A549 (cell line): ENCODE measurements at regions of chr1 and their contacts with region 1.

Region 1: DNA sequence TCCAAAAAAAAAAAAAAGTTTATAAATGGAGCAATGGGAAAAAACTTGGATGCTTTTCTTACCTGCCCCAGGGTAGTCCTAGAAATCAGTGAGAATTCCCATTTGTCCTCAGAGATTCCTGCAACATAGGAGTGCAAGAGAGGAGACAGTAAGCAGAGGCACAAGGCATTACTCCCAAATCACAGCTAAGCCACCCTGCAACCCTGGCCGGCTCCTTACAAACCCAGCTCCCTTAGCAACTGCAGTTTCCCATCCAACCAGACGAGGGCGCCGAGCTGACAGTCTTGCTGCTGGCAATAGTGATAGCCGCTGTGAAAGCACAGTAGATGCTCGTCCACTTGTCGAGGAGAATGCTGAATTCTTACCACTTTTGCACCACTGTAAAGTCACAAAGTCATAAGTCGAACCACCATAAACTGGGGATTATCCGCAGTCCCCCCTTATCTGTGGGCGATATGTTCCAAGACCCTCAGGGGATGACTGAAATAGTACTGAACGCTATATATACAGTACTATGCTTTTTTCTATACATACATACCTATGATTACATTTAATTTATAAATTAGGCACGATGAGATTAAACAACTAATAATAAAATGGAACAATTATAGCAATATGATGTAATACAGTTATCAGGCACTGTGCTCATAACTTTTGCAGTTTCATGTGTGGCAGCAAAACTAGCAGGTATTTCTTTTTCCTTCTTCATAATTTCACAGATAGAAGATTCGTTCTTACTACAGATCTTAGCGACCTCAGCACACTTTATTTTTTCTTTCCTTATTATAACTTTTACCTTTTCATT is 6.0 kb upstream of the PITHD1 start:
- DNase-seq: peak; percentile 38 to 77
- ATAC-seq: peak; percentile 97 to 98
- H3K4me3 ChIP-seq: no peak overlapping the region
- H3K27ac ChIP-seq: no peak overlapping the region
- H3K4me1 ChIP-seq: peaks cover 6% of the 10 kb centered on the region; the same call in 1 of the 3 replicates
- CTCF ChIP-seq: peak; percentile 67
- EP300 ChIP-seq: no peak
- POLR2A ChIP-seq: no peak
- RAD21 ChIP-seq: peak; percentile 68 to 79

Region 2: GRCh38 chr1:23673086-23673813 is 99.0 kb before region 1 on chr1:
- CTCF ChIA-PET with region 1: no interaction called
- POLR2A ChIA-PET with region 1: no interaction called
- DNase-seq: peak; percentile 67 to 79
- ATAC-seq: peak; percentile 85 to 86
- H3K4me3 ChIP-seq: no peak overlapping the region
- H3K27ac ChIP-seq: no peak overlapping the region
- H3K4me1 ChIP-seq: peaks cover 15% of the 10 kb centered on the region
- CTCF ChIP-seq: no peak
- EP300 ChIP-seq: no peak
- POLR2A ChIP-seq: no peak
- RAD21 ChIP-seq: no peak

Region 3: DNA sequence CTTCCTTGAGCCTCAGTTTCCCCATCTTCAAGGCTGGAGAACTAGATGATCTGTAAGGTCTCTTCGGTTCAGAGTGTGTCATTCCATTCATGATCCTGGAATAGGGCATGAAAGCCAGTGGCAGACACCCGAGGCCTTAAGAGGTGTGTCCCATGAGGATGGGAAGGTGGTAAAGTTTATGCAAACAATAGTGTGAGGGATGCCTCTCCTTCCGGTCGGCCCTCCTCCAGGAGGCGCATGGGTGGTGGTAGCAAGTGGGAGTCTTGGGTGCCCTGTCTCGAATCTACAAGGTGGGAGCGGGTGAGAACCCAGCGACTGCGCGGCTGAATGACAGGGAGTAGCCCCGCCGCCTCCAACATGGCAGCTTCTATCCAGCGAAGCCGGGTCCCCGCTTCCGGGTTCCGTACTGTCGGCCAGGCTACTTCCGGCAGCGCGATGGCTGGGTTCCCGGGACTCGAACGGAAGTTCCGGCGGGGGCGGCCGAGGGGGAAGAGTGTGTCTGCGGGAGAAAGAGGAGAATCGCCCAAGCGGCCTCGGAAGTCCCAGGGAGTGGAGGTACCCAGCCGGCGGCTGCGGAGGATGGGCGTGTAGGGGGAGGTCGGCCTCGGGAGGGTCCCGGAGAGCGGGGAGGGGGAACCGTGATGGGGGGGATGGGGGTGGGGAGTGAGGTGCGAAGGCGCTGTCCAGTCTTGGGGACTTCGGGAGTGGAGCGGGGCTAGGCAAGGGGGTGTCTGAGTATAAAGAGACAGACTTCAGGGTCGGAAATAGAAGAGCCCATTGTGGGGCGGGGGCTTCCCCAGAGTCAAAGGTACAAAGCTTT is 18.7 kb after region 1 on chr1 and contains the start of gene LYPLA2:
- CTCF ChIA-PET with region 1: interaction called, 11 read pairs
- POLR2A ChIA-PET with region 1: interaction called, 6 read pairs
- DNase-seq: peak; percentile 83
- ATAC-seq: peak; percentile 81 to 90
- H3K4me3 ChIP-seq: peak within 1 kb of the TSS; percentile 87
- H3K27ac ChIP-seq: peak within 1 kb of the TSS; percentile 93 to 98
- H3K4me1 ChIP-seq: peaks cover 40% of the 10 kb centered on the region
- CTCF ChIP-seq: no peak
- EP300 ChIP-seq: no peak
- POLR2A ChIP-seq: peak; percentile 28; the same call in 1 of the 2 replicates
- RAD21 ChIP-seq: no peak
- polyA plus RNA-seq, gene LYPLA2: 17.8 and 26.0 TPM in 2 replicates

Region 4: GRCh38 chr1:23800400-23801337 is 28.4 kb after region 1 on chr1 and contains the start of gene GALE:
- CTCF ChIA-PET with region 1: interaction called, 19 read pairs
- POLR2A ChIA-PET with region 1: no interaction called
- DNase-seq: peak; percentile 88 to 92
- ATAC-seq: peak; percentile 76 to 85
- H3K4me3 ChIP-seq: peak within 1 kb of the TSS; percentile 72
- H3K27ac ChIP-seq: peak within 1 kb of the TSS; percentile 89 to 99
- H3K4me1 ChIP-seq: peaks cover 12% of the 10 kb centered on the region
- CTCF ChIP-seq: no peak
- EP300 ChIP-seq: no peak
- POLR2A ChIP-seq: peak; percentile 42; the same call in 1 of the 2 replicates
- RAD21 ChIP-seq: no peak
- polyA plus RNA-seq, gene GALE: 38.9 and 39.9 TPM in 2 replicates

Region 5: GRCh38 chr1:23854568-23854967 is 82.3 kb after region 1 on chr1:
- CTCF ChIA-PET with region 1: interaction called, 10 read pairs
- POLR2A ChIA-PET with region 1: no interaction called
- DNase-seq: no peak
- ATAC-seq: peak; percentile 54 to 66; a peak in 3 of 6 replicates
- H3K4me3 ChIP-seq: no peak overlapping the region
- H3K27ac ChIP-seq: no peak overlapping the region
- H3K4me1 ChIP-seq: no peaks in the 10 kb centered on the region
- CTCF ChIP-seq: peak; percentile 43
- EP300 ChIP-seq: no peak
- POLR2A ChIP-seq: no peak
- RAD21 ChIP-seq: peak; percentile 51 to 52; a peak in 4 of 5 replicates

Region 6: DNA sequence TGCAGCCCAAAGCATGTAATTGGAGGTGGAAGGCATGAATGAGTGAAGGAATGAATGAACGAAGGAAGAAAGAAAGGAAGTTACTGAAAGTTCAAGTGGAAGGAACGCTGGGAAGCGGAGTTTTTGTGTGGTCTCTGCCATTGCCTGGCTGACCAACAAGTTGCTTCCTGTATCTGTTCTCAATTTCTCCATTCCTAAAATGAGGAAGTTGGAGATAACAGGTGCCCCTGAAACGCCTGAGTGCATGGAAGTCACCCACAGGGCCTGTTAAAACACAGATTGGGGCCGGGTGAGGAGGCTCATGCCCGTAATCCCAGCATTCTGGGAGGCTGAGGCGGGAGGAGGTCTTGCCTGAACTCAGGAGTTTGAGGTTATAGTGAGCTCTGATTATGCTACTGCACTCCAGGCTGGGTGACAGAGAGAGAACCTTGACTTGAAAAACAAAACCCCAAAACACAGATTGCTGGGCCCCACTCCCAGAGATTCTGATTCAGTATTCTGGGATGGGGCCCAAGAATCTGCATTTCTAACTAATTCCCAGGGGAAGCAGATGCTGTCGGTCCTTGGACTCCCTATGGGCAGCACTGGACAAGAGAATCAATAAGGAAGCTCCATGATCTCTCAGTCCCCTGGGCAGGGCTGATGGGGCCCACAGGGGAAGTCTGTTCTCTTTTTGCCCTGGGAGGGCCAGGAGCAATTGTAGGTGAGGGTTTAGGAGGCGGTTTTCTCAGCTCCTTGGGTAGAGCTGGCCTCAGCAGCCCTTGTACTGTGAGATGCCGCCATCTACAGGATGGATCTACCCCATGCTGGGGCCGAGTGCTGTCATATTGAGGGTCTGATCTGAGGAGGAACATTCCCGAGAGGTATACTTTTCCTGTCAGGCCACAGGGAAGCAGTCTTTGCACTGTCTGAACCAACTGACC is 144.2 kb after region 1 on chr1:
- CTCF ChIA-PET with region 1: interaction called, 22 read pairs
- POLR2A ChIA-PET with region 1: interaction called, 3 read pairs
- DNase-seq: peak; percentile 57 to 81
- ATAC-seq: peak; percentile 96 to 97
- H3K4me3 ChIP-seq: no peak overlapping the region
- H3K27ac ChIP-seq: peak overlapping the region in 1 of 2 experiments; percentile 63; a peak in 2 of 6 replicates
- H3K4me1 ChIP-seq: peaks cover 16% of the 10 kb centered on the region
- CTCF ChIP-seq: peak; percentile 61
- EP300 ChIP-seq: no peak
- POLR2A ChIP-seq: no peak
- RAD21 ChIP-seq: peak; percentile 72 to 85

Region 7: DNA sequence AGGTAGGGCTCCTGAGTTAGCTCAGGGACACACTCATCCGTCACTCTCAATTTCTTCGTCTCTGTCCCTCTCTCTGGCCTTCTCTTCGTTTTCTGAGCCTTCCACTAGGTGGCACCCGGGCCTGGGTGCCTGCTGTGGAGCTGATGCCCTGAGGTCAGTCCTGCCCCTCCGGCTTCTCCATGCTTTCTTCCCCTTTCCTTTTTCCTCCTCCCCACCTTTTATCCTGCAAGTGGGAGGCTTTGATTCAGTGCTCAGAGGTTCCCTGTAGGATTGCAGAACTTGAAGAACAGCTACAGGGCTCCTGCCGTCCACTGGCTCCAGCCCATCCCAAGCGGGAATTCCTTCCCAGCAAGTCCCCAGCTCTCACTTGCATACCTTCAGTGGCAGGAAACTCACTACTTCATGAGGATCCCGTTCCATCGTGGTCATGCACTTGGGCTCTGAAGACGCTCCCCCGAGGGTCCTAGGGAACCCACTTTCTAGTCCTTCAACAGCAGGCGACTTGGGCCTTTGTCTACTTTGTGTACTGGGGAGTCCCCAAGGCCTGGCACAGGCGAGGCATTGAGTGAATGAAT is 916.5 kb after region 1 on chr1:
- CTCF ChIA-PET with region 1: no interaction called
- POLR2A ChIA-PET with region 1: no interaction called
- DNase-seq: peak; percentile 53 to 67
- ATAC-seq: peak; percentile 89
- H3K4me3 ChIP-seq: no peak overlapping the region
- H3K27ac ChIP-seq: peak overlapping the region; percentile 46 to 67; a peak in 4 of 6 replicates
- H3K4me1 ChIP-seq: peaks cover 6% of the 10 kb centered on the region
- CTCF ChIP-seq: peak; percentile 79
- EP300 ChIP-seq: no peak
- POLR2A ChIP-seq: no peak
- RAD21 ChIP-seq: peak; percentile 85 to 92